A673 (cell line): ENCODE measurements at regions of chr4 and their contacts with region 1.

Region 1: GRCh38 chr4:25981749-25982148 is 67.7 kb downstream of the SMIM20 start:
- DNase-seq: no peak
- H3K4me3 ChIP-seq: no peak overlapping the region
- H3K27ac ChIP-seq: no peak overlapping the region
- H3K4me1 ChIP-seq: no peaks in the 10 kb centered on the region
- H3K27me3 ChIP-seq: no peaks in the 10 kb centered on the region
- CTCF ChIP-seq: no peak

Region 2: GRCh38 chr4:25993395-25994185 is 11.8 kb after region 1 on chr4:
- CTCF ChIA-PET with region 1: no interaction called
- POLR2A ChIA-PET with region 1: interaction called, 15 read pairs
- intact Hi-C with region 1: no loop called
- DNase-seq: peak; percentile 54
- H3K4me3 ChIP-seq: no peak overlapping the region
- H3K27ac ChIP-seq: no peak overlapping the region
- H3K4me1 ChIP-seq: no peaks in the 10 kb centered on the region
- H3K27me3 ChIP-seq: no peaks in the 10 kb centered on the region
- CTCF ChIP-seq: peak; percentile 41; the same call in 1 of the 2 replicates